GM12878 (cell line): ENCODE measurements at regions of chr3 and their contacts with region 1.

Region 1: GRCh38 chr3:121545574-121546455 is at the start of gene POLQ:
- DNase-seq: peak; percentile 77
- ATAC-seq: peak; percentile 82
- H3K4me3 ChIP-seq: peak within 1 kb of the TSS; percentile 76
- H3K27ac ChIP-seq: peak within 1 kb of the TSS; percentile 84
- H3K4me1 ChIP-seq: peaks cover 16% of the 10 kb centered on the region
- H3K27me3 ChIP-seq: no peaks in the 10 kb centered on the region
- CTCF ChIP-seq: no peak
- EP300 ChIP-seq: 0 out of 4 replicates have a peak, but pooled peaks of 1 of the 2 experiments have one; percentile 18
- POLR2A ChIP-seq: peak; percentile 83
- RAD21 ChIP-seq: no peak
- polyA plus RNA-seq, gene POLQ: 3.3 to 3.4 TPM

Region 2: GRCh38 chr3:121330634-121331033 is 215.2 kb before region 1 on chr3:
- CTCF ChIA-PET with region 1: no interaction called
- POLR2A ChIA-PET with region 1: no interaction called
- RAD21 ChIA-PET with region 1: no interaction called
- SMC1A ChIA-PET with region 1: no interaction called
- in situ Hi-C with region 1: no loop called
- intact Hi-C with region 1: no loop called
- DNase-seq: no peak
- ATAC-seq: no peak
- H3K4me3 ChIP-seq: no peak overlapping the region
- H3K27ac ChIP-seq: no peak overlapping the region
- H3K4me1 ChIP-seq: no peaks in the 10 kb centered on the region
- H3K27me3 ChIP-seq: no peaks in the 10 kb centered on the region; a peak in 1 of 4 replicates
- CTCF ChIP-seq: no peak
- EP300 ChIP-seq: no peak
- POLR2A ChIP-seq: no peak
- RAD21 ChIP-seq: no peak

Region 3: GRCh38 chr3:121443456-121443855 is 102.4 kb before region 1 on chr3:
- CTCF ChIA-PET with region 1: no interaction called
- POLR2A ChIA-PET with region 1: no interaction called
- RAD21 ChIA-PET with region 1: no interaction called
- SMC1A ChIA-PET with region 1: no interaction called
- in situ Hi-C with region 1: no loop called
- intact Hi-C with region 1: no loop called
- DNase-seq: no peak
- ATAC-seq: no peak
- H3K4me3 ChIP-seq: no peak overlapping the region
- H3K27ac ChIP-seq: no peak overlapping the region
- H3K4me1 ChIP-seq: no peaks in the 10 kb centered on the region
- H3K27me3 ChIP-seq: no peaks in the 10 kb centered on the region
- CTCF ChIP-seq: no peak
- EP300 ChIP-seq: no peak
- POLR2A ChIP-seq: no peak
- RAD21 ChIP-seq: no peak

Region 4: GRCh38 chr3:121749276-121750086 is 203.7 kb after region 1 on chr3 and contains the start of gene GOLGB1:
- CTCF ChIA-PET with region 1: no interaction called
- POLR2A ChIA-PET with region 1: interaction called, 3 read pairs
- RAD21 ChIA-PET with region 1: interaction called, 3 read pairs
- SMC1A ChIA-PET with region 1: interaction called, 5 read pairs
- in situ Hi-C with region 1: no loop called
- intact Hi-C with region 1: loop called (anchors 5 kb)
- DNase-seq: peak; percentile 100
- ATAC-seq: peak; percentile 96
- H3K4me3 ChIP-seq: peak within 1 kb of the TSS; percentile 91
- H3K27ac ChIP-seq: peak within 1 kb of the TSS; percentile 72
- H3K4me1 ChIP-seq: no peaks in the 10 kb centered on the region
- H3K27me3 ChIP-seq: no peaks in the 10 kb centered on the region; a peak in 1 of 4 replicates
- CTCF ChIP-seq: no peak
- EP300 ChIP-seq: no peak
- POLR2A ChIP-seq: peak; percentile 100
- RAD21 ChIP-seq: no peak
- polyA plus RNA-seq, gene GOLGB1: 7.4 to 9.6 TPM

Region 5: DNA sequence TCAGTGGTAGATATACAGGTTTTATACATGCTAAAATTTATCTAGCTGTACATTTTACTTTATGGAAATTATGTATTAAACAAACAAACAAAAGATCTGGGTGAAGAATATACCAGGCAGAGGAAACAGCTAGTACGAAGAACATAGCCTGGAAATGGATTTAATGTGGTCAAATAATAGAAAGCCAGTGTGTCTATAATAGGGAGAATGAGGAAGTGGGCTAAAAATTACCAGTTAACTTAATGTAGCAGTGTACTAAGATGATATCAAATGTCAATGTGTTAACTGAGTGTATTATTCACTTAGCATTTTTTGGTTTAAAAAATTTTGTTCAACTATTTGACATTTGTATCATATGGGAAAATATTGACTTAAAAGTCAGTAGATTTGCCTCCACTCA is 325.6 kb after region 1 on chr3:
- CTCF ChIA-PET with region 1: interaction called, 3 read pairs
- POLR2A ChIA-PET with region 1: no interaction called
- RAD21 ChIA-PET with region 1: no interaction called
- SMC1A ChIA-PET with region 1: interaction called, 3 read pairs
- in situ Hi-C with region 1: no loop called
- intact Hi-C with region 1: loop called (anchors 10 kb)
- DNase-seq: no peak
- ATAC-seq: no peak
- H3K4me3 ChIP-seq: no peak overlapping the region
- H3K27ac ChIP-seq: no peak overlapping the region
- H3K4me1 ChIP-seq: no peaks in the 10 kb centered on the region
- H3K27me3 ChIP-seq: no peaks in the 10 kb centered on the region
- CTCF ChIP-seq: no peak
- EP300 ChIP-seq: no peak
- POLR2A ChIP-seq: no peak
- RAD21 ChIP-seq: no peak

Region 6: DNA sequence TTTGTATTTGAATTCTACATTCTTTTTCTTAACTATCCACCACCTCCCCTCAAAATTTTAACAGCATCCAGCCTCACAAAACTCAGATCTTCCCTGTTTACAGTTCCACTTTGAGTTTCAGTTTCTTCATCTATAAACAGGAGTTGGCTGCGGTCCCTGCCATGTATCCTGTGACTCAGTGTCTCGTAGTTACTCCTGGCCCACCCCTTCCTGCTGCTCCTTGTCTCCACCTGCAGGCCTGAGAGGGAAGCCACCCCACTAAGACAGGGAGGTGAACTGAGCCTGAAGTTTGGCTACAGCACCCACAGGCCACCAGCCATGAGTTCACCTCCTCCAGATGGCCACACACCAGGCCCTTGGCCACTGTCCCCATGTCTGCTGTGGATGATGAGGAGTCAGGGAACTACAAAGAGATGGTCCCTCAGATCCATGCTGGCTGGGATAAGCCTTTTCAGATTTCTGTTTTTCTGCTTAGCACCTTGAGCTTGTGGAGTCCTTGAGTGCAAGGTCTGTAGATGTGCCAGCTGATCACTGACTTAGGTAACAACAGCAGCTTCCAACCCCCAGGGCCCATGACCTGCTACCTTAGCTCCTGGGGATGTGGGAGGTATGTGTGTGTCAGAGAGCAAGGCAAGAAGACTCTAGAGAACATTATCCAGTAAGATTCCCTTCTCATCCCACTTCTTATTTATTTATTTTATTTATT is 546.8 kb after region 1 on chr3:
- CTCF ChIA-PET with region 1: interaction called, 8 read pairs
- POLR2A ChIA-PET with region 1: no interaction called
- RAD21 ChIA-PET with region 1: interaction called, 4 read pairs
- SMC1A ChIA-PET with region 1: interaction called, 8 read pairs
- in situ Hi-C with region 1: loop called (anchors 5 kb)
- intact Hi-C with region 1: no loop called
- DNase-seq: no peak
- ATAC-seq: peak; percentile 80
- H3K4me3 ChIP-seq: no peak overlapping the region; the same call in 1 of the 2 replicates
- H3K27ac ChIP-seq: peak overlapping the region; percentile 59
- H3K4me1 ChIP-seq: peaks cover 59% of the 10 kb centered on the region
- H3K27me3 ChIP-seq: no peaks in the 10 kb centered on the region
- CTCF ChIP-seq: peak; percentile 60 to 84 (median 80)
- EP300 ChIP-seq: no peak
- POLR2A ChIP-seq: no peak
- RAD21 ChIP-seq: peak; percentile 76

Region 7: DNA sequence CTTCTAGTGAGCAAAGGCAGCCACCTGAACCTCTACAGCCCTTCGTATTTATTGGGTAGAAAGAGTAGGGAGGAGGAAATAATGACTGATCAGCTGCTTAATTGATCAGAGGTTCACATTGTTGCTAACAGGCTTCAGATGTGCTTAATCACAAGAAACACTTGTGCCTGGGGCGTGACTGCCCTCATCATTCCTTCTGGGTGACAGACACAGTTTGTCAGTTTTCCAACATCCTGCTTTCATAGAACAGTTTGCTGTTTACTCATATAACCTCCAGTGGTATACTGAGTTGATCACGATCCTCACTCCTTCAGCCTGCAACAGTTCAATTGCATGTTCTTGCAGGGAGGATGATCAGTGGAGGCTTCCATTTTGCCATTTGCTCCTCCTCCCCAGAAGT is 624.1 kb after region 1 on chr3:
- CTCF ChIA-PET with region 1: no interaction called
- POLR2A ChIA-PET with region 1: no interaction called
- RAD21 ChIA-PET with region 1: no interaction called
- SMC1A ChIA-PET with region 1: no interaction called
- in situ Hi-C with region 1: no loop called
- intact Hi-C with region 1: no loop called
- DNase-seq: no peak
- ATAC-seq: no peak
- H3K4me3 ChIP-seq: no peak overlapping the region
- H3K27ac ChIP-seq: no peak overlapping the region
- H3K4me1 ChIP-seq: no peaks in the 10 kb centered on the region
- H3K27me3 ChIP-seq: no peaks in the 10 kb centered on the region
- CTCF ChIP-seq: no peak
- EP300 ChIP-seq: no peak
- POLR2A ChIP-seq: no peak
- RAD21 ChIP-seq: no peak

Region 8: GRCh38 chr3:122265957-122266356 is 720.1 kb after region 1 on chr3:
- CTCF ChIA-PET with region 1: interaction called, 5 read pairs
- POLR2A ChIA-PET with region 1: no interaction called
- RAD21 ChIA-PET with region 1: interaction called, 5 read pairs
- SMC1A ChIA-PET with region 1: interaction called, 10 read pairs
- in situ Hi-C with region 1: loop called (anchors 5 kb)
- intact Hi-C with region 1: no loop called
- DNase-seq: no peak
- ATAC-seq: peak; percentile 11; the same call in 2 of the 3 replicates
- H3K4me3 ChIP-seq: no peak overlapping the region
- H3K27ac ChIP-seq: peak overlapping the region; percentile 43; the same call in 1 of the 2 replicates
- H3K4me1 ChIP-seq: peaks cover 26% of the 10 kb centered on the region
- H3K27me3 ChIP-seq: no peaks in the 10 kb centered on the region
- CTCF ChIP-seq: 0 out of 6 replicates have a peak, but pooled peaks of 1 of the 3 experiments have one; percentile 3
- EP300 ChIP-seq: 0 out of 4 replicates have a peak, but pooled peaks of 1 of the 2 experiments have one; percentile 11
- POLR2A ChIP-seq: no peak
- RAD21 ChIP-seq: peak; percentile 38; the same call in 1 of the 2 replicates

Region 9: GRCh38 chr3:122383771-122384697 is 838.2 kb after region 1 on chr3 and contains the start of gene FAM162A:
- CTCF ChIA-PET with region 1: no interaction called
- POLR2A ChIA-PET with region 1: no interaction called
- RAD21 ChIA-PET with region 1: interaction called, 6 read pairs
- SMC1A ChIA-PET with region 1: interaction called, 5 read pairs
- in situ Hi-C with region 1: no loop called
- intact Hi-C with region 1: loop called (anchors 10 kb)
- DNase-seq: peak; percentile 83
- ATAC-seq: peak; percentile 95
- H3K4me3 ChIP-seq: peak within 1 kb of the TSS; percentile 76
- H3K27ac ChIP-seq: peak within 1 kb of the TSS; percentile 82
- H3K4me1 ChIP-seq: peaks cover 16% of the 10 kb centered on the region
- H3K27me3 ChIP-seq: no peaks in the 10 kb centered on the region
- CTCF ChIP-seq: peak; percentile 55 to 77 (median 61); a peak in 5 of 6 replicates
- EP300 ChIP-seq: peak in 1 of 2 experiments; percentile 8; a peak in 1 of 4 replicates
- POLR2A ChIP-seq: peak; percentile 96
- RAD21 ChIP-seq: peak; percentile 38
- polyA plus RNA-seq, gene FAM162A: 290 to 297 TPM